ENCODE measurements at regions of chr15 and their contacts with region 1.

Region 1: GRCh38 chr15:51281368-51281967 is 56.9 kb downstream of the CYP19A1 start:
- DNase-seq: peak; percentile 82 to 90
- ATAC-seq: peak; percentile 90
- H3K4me3 ChIP-seq: no peak overlapping the region
- H3K27ac ChIP-seq: no peak overlapping the region
- H3K4me1 ChIP-seq: no peaks in the 10 kb centered on the region
- H3K27me3 ChIP-seq: no peaks in the 10 kb centered on the region

Region 2: GRCh38 chr15:51212909-51213308 is 68.6 kb before region 1 on chr15:
- intact Hi-C with region 1: no loop called
- DNase-seq: no peak
- ATAC-seq: no peak
- H3K4me3 ChIP-seq: no peak overlapping the region
- H3K27ac ChIP-seq: no peak overlapping the region
- H3K4me1 ChIP-seq: no peaks in the 10 kb centered on the region
- H3K27me3 ChIP-seq: no peaks in the 10 kb centered on the region

Region 3: GRCh38 chr15:51322621-51323296 is 41.3 kb after region 1 on chr15:
- intact Hi-C with region 1: no loop called
- DNase-seq: peak; percentile 76 to 83
- ATAC-seq: peak; percentile 50
- H3K4me3 ChIP-seq: no peak overlapping the region
- H3K27ac ChIP-seq: no peak overlapping the region
- H3K4me1 ChIP-seq: no peaks in the 10 kb centered on the region
- H3K27me3 ChIP-seq: no peaks in the 10 kb centered on the region

Region 4: DNA sequence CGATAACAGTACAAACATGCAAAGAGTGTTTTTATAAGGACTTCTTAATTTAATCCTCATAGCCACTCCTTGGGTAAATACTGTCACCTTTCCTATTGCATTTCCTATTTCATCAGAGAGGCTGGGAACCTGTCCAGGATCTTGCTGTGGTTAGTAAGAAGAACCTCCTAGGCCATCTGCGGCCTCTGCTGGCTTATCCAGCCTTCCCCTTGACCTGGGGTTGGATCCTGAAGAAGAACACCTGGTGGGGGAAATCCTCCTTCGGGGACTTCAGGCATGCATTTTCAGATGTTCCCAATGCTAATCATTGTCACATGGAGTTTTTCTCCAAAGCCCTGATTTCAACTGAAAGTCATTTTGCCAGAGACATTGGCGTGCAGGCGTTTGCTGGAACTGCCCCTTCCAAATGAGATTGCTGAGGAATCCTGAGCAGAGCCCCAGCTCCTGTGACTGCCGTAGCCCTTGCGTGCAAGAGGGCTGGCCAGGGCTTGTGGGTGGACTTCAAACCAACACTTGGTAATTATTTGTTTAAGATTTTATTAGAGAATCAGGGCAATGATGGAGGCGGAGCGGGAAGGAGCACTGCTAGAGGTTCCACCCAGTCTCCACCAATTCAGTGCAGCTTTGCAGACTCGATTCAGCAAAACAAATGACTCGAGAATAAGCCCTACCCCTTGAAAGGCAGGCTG is 85.6 kb after region 1 on chr15:
- intact Hi-C with region 1: no loop called
- DNase-seq: no peak
- ATAC-seq: peak; percentile 56
- H3K4me3 ChIP-seq: no peak overlapping the region
- H3K27ac ChIP-seq: no peak overlapping the region
- H3K4me1 ChIP-seq: peaks cover 1 to 5% of the 10 kb centered on the region in 2 donors
- H3K27me3 ChIP-seq: no peaks in the 10 kb centered on the region

Region 5: DNA sequence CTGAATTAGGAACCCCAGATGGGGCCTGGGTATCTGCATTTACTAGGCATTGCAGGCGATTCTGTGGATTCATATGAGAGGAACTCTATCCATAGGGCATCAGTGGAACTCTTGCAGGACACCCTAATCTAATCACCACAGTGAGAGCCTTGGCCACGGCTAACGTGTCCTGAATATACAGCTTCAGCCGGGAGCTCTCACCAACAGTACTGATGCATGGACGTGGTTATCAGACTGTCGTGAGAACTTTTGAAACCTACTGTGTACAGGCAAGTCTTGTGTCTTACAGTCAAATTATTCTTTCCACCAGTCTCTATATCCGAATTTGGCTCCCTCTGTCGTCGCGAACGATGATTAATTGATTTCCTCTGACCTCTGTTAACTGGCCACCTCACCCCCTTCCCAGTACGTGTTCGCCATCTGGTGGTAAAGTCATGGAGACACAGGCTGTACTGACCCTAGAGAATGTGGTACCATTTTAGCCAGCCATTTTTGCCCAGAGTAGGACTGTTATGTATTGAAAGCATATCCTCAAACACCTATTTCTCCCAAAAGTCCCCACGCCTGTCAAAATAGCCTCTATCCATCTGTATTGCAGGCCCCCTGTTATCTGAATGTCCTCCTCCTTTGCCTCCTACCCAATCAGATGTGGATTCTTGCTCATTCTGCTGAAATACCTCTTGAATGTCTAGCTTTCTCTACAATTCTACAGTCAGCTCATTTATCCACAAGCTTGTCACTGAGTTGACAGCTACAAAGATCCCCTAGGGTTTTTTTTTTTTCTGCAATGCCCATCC is 99.7 kb after region 1 on chr15:
- intact Hi-C with region 1: loop called (anchors 1 kb)
- DNase-seq: peak in 1 of 2 donors; percentile 69
- ATAC-seq: peak; percentile 92
- H3K4me3 ChIP-seq: no peak overlapping the region
- H3K27ac ChIP-seq: no peak overlapping the region
- H3K4me1 ChIP-seq: no peaks in the 10 kb centered on the region
- H3K27me3 ChIP-seq: no peaks in the 10 kb centered on the region

Region 6: GRCh38 chr15:51759557-51760070 is 478.1 kb after region 1 on chr15:
- intact Hi-C with region 1: no loop called
- DNase-seq: peak in 1 of 2 donors; percentile 70
- ATAC-seq: peak; percentile 78
- H3K4me3 ChIP-seq: no peak overlapping the region
- H3K27ac ChIP-seq: no peak overlapping the region
- H3K4me1 ChIP-seq: no peaks in the 10 kb centered on the region
- H3K27me3 ChIP-seq: no peaks in the 10 kb centered on the region